ENCODE measurements at regions of chr1 and their contacts with region 1.

Region 1: DNA sequence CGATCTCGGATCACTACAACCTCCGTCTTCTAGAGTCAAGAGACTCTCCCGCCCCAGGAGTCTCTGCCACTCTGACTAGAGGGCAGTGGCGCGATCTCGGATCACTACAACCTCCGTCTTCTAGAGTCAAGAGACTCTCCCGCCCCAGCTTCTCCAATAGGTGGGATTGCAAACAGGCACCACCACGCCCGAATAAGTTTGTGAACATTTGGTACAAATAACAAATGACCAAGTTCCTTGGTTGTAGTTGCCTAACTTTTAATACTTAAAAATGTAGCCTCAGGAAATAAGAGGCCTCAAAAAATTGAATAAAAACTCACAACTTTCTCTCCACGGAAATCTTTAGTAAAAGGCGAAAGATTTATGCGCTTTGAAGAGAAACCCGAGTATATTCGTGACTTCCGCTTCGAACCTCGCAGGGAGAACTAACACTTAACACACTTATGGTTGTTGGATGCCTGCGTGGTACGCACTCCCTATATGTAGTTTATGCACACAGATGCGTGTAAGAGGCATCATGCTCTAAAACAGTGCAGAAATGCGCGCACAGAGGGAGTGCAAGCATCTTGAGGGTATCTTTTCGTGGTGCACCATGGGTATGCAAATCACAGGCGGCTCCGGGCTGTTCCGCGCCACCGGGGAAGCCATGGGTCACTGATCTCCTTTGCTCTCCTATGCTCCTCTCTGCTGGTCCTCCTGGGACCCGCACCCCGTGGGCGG is 11.4 kb downstream of the BTBD19 start:
- DNase-seq: peak; percentile 93 to 97 (median 94)
- H3K4me3 ChIP-seq: peak overlapping the region; percentile 52 to 93 (median 80)
- H3K27ac ChIP-seq: peak overlapping the region; percentile 100
- H3K4me1 ChIP-seq: peaks cover 0 to 35% (median 22%) of the 10 kb centered on the region in 4 experiments
- H3K27me3 ChIP-seq: no peaks in the 10 kb centered on the region

Region 2: GRCh38 chr1:44786138-44786840 is 33.5 kb before region 1 on chr1:
- CTCF ChIA-PET with region 1: interaction called, 14 read pairs
- POLR2A ChIA-PET with region 1: interaction called, 4 read pairs
- DNase-seq: peak; percentile 76 to 85 (median 85)
- H3K4me3 ChIP-seq: peak overlapping the region in 6 of 7 experiments; percentile 23 to 76 (median 58)
- H3K27ac ChIP-seq: no peak overlapping the region
- H3K4me1 ChIP-seq: peaks cover 8 to 35% (median 30%) of the 10 kb centered on the region in 4 experiments
- H3K27me3 ChIP-seq: no peaks in the 10 kb centered on the region

Region 3: GRCh38 chr1:44799770-44800584 is 19.8 kb before region 1 on chr1 and contains the start of gene PLK3:
- CTCF ChIA-PET with region 1: interaction called, 69 read pairs
- POLR2A ChIA-PET with region 1: interaction called, 59 read pairs
- DNase-seq: peak; percentile 97 to 99 (median 99)
- H3K4me3 ChIP-seq: peak within 1 kb of the TSS; percentile 58 to 86 (median 78)
- H3K27ac ChIP-seq: peak within 1 kb of the TSS in 1 of 2 experiments; percentile 71
- H3K4me1 ChIP-seq: peaks cover 0 to 32% (median 24%) of the 10 kb centered on the region in 4 experiments
- H3K27me3 ChIP-seq: no peaks in the 10 kb centered on the region

Region 4: DNA sequence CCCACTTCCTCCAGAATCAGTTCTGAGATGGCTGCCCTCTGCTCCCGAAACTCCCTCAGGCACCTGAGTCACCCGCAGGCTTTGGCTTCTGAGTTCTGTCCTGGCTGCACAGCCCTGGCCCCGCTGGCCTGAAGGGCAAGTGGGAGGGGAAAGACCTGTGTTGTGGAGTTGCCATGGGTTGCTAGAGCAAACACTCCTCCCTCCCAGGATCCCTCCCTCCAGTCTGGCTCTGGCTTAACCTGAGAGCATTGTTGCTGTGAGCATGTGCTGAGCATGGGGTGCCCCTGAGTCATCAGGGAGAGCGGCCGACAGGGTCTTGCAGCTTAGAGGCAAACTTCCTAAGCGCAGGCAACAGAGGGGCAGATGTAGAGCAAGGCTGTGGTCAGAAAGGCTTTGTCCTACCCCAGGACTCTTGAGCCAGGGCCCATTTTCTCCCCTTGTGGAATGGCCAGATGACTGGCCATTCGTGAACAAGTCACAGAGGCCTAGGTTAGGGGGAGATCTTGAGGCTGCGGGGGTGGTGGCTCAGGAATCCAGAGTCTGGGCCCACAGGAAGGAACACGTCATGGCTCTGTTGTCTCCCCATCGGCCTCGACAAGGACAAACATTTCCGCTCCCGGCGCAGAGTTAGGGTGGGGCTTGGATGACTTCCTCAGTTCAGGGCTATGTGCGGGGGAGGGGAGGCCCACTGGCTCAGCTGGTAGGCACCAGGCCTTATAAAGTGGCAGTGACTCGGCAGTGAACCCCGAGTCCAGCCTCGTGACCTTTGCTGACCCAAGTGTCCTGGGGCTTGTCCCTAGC is 12.3 kb before region 1 on chr1 and contains the start of gene DYNLT4:
- CTCF ChIA-PET with region 1: interaction called, 69 read pairs
- POLR2A ChIA-PET with region 1: interaction called, 64 read pairs
- DNase-seq: peak; percentile 92 to 95 (median 95)
- H3K4me3 ChIP-seq: peak within 1 kb of the TSS in 3 of 7 experiments; percentile 34 to 54 (median 48)
- H3K27ac ChIP-seq: peak within 1 kb of the TSS; percentile 92 to 97
- H3K4me1 ChIP-seq: peaks cover 11 to 65% (median 62%) of the 10 kb centered on the region in 4 experiments
- H3K27me3 ChIP-seq: no peaks in the 10 kb centered on the region

Region 5: GRCh38 chr1:44835738-44836675 is 16.2 kb after region 1 on chr1:
- CTCF ChIA-PET with region 1: interaction called, 10 read pairs
- POLR2A ChIA-PET with region 1: interaction called, 21 read pairs
- DNase-seq: peak; percentile 86 to 94 (median 89)
- H3K4me3 ChIP-seq: peak overlapping the region in 1 of 7 experiments; percentile 51
- H3K27ac ChIP-seq: no peak overlapping the region
- H3K4me1 ChIP-seq: peaks cover 0 to 54% (median 51%) of the 10 kb centered on the region in 4 experiments
- H3K27me3 ChIP-seq: no peaks in the 10 kb centered on the region

Region 6: GRCh38 chr1:44857446-44857845 is 37.7 kb after region 1 on chr1:
- CTCF ChIA-PET with region 1: no interaction called
- POLR2A ChIA-PET with region 1: no interaction called
- DNase-seq: no peak
- H3K4me3 ChIP-seq: no peak overlapping the region
- H3K27ac ChIP-seq: no peak overlapping the region
- H3K4me1 ChIP-seq: peaks cover 0 to 16% (median 1%) of the 10 kb centered on the region in 4 experiments
- H3K27me3 ChIP-seq: no peaks in the 10 kb centered on the region

Region 7: GRCh38 chr1:44947774-44948311 is 128.1 kb after region 1 on chr1:
- CTCF ChIA-PET with region 1: no interaction called
- POLR2A ChIA-PET with region 1: no interaction called
- DNase-seq: no peak
- H3K4me3 ChIP-seq: peak overlapping the region in 1 of 7 experiments; percentile 20
- H3K27ac ChIP-seq: no peak overlapping the region
- H3K4me1 ChIP-seq: peaks cover 0 to 19% (median 8%) of the 10 kb centered on the region in 4 experiments
- H3K27me3 ChIP-seq: no peaks in the 10 kb centered on the region